MCF 10A (cell line): ENCODE measurements at regions of chr1 and their contacts with region 1.

Region 1: DNA sequence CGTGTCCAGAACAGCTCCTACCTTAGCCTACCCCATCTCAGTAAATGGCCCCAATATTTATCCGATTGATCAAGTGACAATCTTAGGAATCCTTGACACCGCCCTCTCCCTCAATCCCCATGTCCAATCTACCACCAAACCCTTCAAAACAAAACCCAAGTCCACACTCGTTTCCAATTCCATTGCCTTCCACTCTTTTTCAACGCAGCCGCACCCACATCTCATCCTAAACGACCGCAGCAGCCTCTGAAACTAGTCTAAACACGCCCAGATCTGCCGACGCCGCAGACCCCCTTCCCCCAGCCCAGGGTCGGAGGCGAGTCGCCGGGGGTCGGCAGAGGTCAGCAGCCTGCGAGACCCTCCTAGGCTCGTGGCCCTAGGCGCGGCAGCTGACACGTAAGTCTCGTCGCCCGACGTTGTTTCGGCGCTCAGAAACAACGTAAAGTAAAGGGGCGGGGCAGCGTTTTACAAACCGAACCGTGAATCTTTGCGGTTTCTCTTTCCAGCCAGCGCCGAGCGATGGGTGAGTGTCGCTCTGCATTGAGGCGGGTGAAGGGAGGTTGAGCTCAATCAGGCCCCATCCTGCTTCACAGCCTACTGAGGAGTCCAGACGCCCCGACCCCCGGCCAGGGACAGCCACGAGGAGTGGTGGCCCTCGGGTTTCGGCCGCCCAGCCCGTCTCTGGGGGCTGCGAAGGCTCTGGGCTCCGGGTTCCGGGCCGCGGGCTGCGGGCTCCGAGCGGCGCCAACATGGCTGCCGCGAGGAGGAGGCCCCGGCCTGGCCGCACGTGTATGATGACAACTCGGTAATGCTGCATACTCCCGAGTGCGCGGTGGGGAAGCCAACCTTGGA is at the start of gene RPS8:
- DNase-seq: peak; percentile 96
- H3K4me3 Mint-ChIP-seq: peak within 1 kb of the TSS; percentile 91
- H3K27ac Mint-ChIP-seq: peak within 1 kb of the TSS; percentile 99
- H3K4me1 Mint-ChIP-seq: peaks cover 25% of the 10 kb centered on the region
- H3K27me3 Mint-ChIP-seq: no peaks in the 10 kb centered on the region
- CTCF ChIP-seq: no peak
- total RNA-seq, gene RPS8: 2,454 and 2,713 TPM in 2 replicates

Region 2: DNA sequence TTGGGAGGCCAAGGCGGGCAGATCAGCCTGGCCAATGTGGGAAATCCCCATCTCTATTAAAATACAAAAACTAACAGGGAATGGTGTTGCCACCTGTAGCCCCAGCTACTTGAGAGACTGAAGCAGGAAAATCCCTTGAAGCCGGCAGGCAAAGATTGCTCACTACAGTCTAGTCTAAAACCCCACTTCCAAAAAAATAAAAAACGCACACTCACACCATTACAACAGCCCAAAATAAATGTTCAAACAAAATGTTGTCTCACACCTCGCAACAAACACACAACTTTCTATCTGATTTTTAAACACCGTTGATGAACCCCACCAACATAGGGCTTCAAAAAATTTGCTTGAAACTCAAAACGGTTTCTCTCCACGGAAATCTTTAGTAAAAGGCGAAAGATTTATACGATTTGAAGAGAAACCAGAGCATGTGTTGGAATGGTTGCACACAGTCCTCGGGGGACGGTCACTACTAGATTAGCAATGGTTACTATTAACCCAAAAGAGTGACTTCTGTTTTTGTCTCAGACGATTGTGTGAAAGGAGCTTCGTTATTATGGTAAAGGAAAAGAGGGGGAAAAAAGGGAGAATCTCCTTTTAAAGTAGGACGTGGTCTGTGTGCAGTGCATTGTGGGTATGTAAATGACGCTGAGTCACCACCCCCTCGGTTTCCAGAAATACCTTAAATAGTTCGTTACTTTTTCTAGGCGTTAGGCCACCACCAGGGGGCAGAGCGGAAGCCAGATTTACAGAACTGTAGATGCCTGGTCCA is 44.4 kb before region 1 on chr1 and contains the start of gene RNU5D-1:
- CTCF ChIA-PET with region 1: interaction called, 20 read pairs
- POLR2A ChIA-PET with region 1: interaction called, 93 read pairs
- intact Hi-C with region 1: loop called (anchors 1 kb)
- DNase-seq: peak; percentile 97
- H3K4me3 Mint-ChIP-seq: peak within 1 kb of the TSS; percentile 51
- H3K27ac Mint-ChIP-seq: peak within 1 kb of the TSS; percentile 100
- H3K4me1 Mint-ChIP-seq: peaks cover 26% of the 10 kb centered on the region
- H3K27me3 Mint-ChIP-seq: no peaks in the 10 kb centered on the region
- CTCF ChIP-seq: peak; percentile 77
- total RNA-seq, gene RNU5D-1: not detected in 2 replicates

Region 3: DNA sequence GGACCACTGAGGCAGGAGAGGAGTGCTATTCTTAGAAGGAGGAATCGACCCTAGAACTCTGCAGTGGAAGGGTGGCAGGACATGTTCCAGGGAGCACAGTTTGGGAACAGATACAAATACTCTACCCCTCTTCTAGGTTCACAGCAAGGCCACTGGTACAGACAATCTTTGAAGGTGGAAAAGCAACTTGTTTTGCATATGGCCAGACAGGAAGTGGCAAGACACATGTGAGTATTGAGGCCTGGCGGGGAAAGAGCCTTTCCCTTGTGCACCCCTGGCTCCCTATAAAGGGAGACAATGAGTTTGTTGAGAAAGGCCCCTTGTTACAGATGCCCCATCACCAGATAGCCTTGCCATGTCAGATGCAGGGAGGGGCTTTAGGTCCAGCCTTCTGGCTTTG is 17.9 kb before region 1 on chr1:
- CTCF ChIA-PET with region 1: no interaction called
- POLR2A ChIA-PET with region 1: interaction called, 14 read pairs
- intact Hi-C with region 1: no loop called
- DNase-seq: no peak
- H3K4me3 Mint-ChIP-seq: no peak overlapping the region
- H3K27ac Mint-ChIP-seq: no peak overlapping the region
- H3K4me1 Mint-ChIP-seq: no peaks in the 10 kb centered on the region
- H3K27me3 Mint-ChIP-seq: no peaks in the 10 kb centered on the region
- CTCF ChIP-seq: no peak

Region 4: GRCh38 chr1:44799770-44800584 is 24.7 kb after region 1 on chr1 and contains the start of gene PLK3:
- CTCF ChIA-PET with region 1: no interaction called
- POLR2A ChIA-PET with region 1: interaction called, 51 read pairs
- intact Hi-C with region 1: no loop called
- DNase-seq: peak; percentile 97
- H3K4me3 Mint-ChIP-seq: peak within 1 kb of the TSS; percentile 86
- H3K27ac Mint-ChIP-seq: peak within 1 kb of the TSS; percentile 100
- H3K4me1 Mint-ChIP-seq: peaks cover 23% of the 10 kb centered on the region
- H3K27me3 Mint-ChIP-seq: no peaks in the 10 kb centered on the region
- CTCF ChIP-seq: peak; percentile 85
- total RNA-seq, gene PLK3: 47.2 and 68.0 TPM in 2 replicates

Region 5: GRCh38 chr1:44819608-44820327 is 44.5 kb after region 1 on chr1:
- CTCF ChIA-PET with region 1: interaction called, 3 read pairs
- POLR2A ChIA-PET with region 1: interaction called, 12 read pairs
- intact Hi-C with region 1: no loop called
- DNase-seq: peak; percentile 94
- H3K4me3 Mint-ChIP-seq: peak overlapping the region; percentile 74
- H3K27ac Mint-ChIP-seq: peak overlapping the region; percentile 99
- H3K4me1 Mint-ChIP-seq: peaks cover 37% of the 10 kb centered on the region
- H3K27me3 Mint-ChIP-seq: no peaks in the 10 kb centered on the region
- CTCF ChIP-seq: no peak

Region 6: DNA sequence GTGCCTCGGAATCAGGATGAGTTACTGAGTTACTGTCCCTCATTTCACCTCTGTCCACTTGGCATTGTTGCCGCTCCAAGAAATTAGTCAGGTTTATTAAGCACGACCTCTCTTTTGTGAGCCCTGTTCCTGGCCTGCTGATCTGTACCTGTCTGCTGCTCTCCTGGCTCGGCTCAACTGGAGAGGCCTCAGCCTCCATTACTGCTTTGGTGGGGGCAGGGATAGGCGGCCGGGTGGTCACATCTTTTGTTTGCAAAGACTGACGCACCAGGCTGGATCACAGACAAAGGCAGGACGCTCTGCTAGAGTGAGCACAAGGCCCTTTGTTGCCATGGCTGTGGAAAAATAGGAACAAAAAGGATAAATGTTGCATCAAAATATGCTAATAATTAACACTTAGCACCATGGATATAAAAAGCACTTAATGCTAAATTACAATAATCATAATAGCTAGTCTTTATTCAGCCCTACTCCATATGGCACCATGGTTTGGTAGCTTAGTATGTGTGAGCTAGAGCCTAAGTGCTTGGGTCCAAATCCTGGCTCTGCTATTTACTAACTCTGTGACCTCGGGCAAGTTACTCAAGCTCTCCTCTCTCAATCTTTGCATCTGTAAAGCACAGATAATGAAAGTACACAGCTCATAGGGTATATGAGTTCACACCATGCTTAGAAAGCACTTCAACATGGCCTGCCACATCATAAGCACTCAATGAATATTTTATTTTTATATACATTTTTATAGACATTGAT is 522.5 kb after region 1 on chr1:
- CTCF ChIA-PET with region 1: no interaction called
- POLR2A ChIA-PET with region 1: no interaction called
- intact Hi-C with region 1: no loop called
- DNase-seq: no peak
- H3K4me3 Mint-ChIP-seq: no peak overlapping the region
- H3K27ac Mint-ChIP-seq: no peak overlapping the region
- H3K4me1 Mint-ChIP-seq: no peaks in the 10 kb centered on the region
- H3K27me3 Mint-ChIP-seq: no peaks in the 10 kb centered on the region
- CTCF ChIP-seq: no peak